A549 (cell line): ENCODE measurements at regions of chr5 and their contacts with region 1.

Region 1: GRCh38 chr5:337563-338130 is 16.1 kb downstream of the AHRR start:
- DNase-seq: peak; percentile 70 to 77
- ATAC-seq: peak; percentile 99 to 100
- H3K4me3 ChIP-seq: no peak overlapping the region
- H3K27ac ChIP-seq: peak overlapping the region in 1 of 2 experiments; percentile 42; a peak in 1 of 6 replicates
- H3K4me1 ChIP-seq: no peaks in the 10 kb centered on the region
- CTCF ChIP-seq: peak; percentile 50
- EP300 ChIP-seq: no peak
- POLR2A ChIP-seq: no peak
- RAD21 ChIP-seq: peak; percentile 14 to 41; a peak in 1 of 5 replicates

Region 2: DNA sequence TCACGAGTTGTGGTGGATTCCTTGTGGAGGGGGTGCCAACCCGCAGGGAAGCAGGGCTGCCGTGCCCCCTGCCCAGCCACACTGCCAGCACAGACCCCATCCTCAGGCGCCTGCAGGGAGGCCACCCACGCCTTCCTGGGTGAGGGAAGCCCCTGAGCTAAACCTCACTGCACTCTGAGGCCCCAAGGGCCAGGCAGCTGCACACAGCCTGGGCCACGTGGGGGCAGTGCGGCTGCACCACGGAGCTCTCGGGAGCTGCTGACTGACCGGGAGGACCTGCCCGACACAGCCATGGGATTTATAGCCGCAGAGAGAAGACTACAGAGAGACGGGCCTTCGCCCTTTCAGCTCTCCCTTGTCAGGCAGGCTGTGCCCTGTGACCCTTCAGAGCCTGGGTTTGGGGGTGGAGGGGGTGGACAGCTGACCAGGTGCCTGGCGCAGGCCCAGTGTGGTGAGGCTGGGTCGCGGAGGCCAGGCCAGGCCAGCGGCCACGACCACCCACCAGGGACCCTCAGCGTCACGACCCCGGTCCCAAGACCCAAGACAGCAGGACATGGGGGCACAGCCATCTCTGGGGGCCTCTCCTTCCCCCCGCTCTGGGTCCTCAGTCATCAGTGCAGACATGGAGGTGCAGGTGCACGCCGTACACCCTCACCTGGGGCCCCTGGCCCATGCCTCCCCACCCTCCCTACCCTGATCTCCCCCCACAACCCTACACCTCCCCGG is 20.4 kb before region 1 on chr5:
- CTCF ChIA-PET with region 1: interaction called, 20 read pairs
- POLR2A ChIA-PET with region 1: interaction called, 3 read pairs
- DNase-seq: peak; percentile 82 to 88
- ATAC-seq: peak; percentile 75 to 90
- H3K4me3 ChIP-seq: no peak overlapping the region
- H3K27ac ChIP-seq: peak overlapping the region; percentile 33 to 87; a peak in 4 of 6 replicates
- H3K4me1 ChIP-seq: peaks cover 24% of the 10 kb centered on the region
- CTCF ChIP-seq: peak; percentile 69
- EP300 ChIP-seq: no peak
- POLR2A ChIP-seq: no peak
- RAD21 ChIP-seq: peak; percentile 81 to 86

Region 3: DNA sequence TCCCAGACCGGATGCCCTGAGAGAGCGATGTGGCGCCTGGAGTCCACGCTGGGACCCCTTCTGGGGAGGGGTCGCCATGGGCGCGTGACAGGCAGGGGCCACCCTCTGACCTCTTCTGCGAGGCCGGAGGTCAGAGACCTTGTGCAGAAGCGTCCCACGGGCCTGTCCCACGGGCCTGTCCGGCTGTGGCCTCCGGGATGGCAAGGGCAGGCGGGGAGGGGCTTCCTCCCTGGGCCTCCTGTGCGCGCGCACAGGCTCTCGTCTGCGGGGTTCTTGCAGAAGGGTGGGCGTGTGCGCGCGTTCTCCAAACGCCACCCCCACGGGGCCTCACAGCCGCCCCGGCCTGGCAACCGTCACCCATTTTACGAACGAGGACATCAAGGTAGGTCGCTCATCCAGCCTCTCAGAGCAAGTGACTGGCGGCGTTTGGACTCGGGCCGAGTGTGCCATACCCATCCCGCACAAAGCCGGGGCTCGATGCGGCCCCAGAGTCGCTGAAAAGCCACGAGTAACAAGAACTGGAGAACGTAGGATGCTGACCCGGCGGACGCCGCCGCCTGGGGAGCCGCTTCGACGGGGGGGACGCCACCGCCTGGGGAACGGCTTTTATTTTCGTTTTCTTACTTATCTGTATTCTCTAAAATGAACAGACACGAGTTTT is 15.2 kb before region 1 on chr5:
- CTCF ChIA-PET with region 1: interaction called, 20 read pairs
- POLR2A ChIA-PET with region 1: interaction called, 3 read pairs
- DNase-seq: no peak
- ATAC-seq: no peak
- H3K4me3 ChIP-seq: peak overlapping the region; percentile 53
- H3K27ac ChIP-seq: peak overlapping the region; percentile 56 to 90; a peak in 5 of 6 replicates
- H3K4me1 ChIP-seq: peaks cover 22% of the 10 kb centered on the region
- CTCF ChIP-seq: no peak
- EP300 ChIP-seq: no peak
- POLR2A ChIP-seq: no peak
- RAD21 ChIP-seq: no peak

Region 4: DNA sequence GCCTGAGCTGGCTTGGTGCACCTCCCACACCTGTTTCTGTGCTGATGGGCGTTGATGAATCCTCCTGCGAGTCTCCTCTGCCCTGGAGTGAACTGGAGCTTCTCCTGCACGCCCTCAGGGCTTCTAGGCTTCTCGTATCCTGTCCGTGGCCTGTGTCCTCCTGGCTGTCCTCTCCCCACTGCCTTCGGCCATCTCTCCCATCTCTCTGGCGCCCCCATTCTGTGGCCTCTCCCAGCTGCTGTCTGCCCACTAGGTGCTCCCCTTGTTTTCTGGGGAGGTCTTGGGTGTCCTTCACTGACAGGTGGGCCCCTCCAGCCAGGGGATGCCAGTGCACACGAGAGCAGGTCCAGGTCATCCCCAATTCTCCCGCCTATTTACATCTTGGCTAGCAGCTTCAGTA is 12.7 kb after region 1 on chr5:
- CTCF ChIA-PET with region 1: interaction called, 18 read pairs
- POLR2A ChIA-PET with region 1: no interaction called
- DNase-seq: peak in 1 of 2 experiments; percentile 18
- ATAC-seq: peak in 1 of 2 experiments; percentile 56; a peak in 2 of 6 replicates
- H3K4me3 ChIP-seq: no peak overlapping the region
- H3K27ac ChIP-seq: no peak overlapping the region
- H3K4me1 ChIP-seq: no peaks in the 10 kb centered on the region
- CTCF ChIP-seq: no peak
- EP300 ChIP-seq: no peak
- POLR2A ChIP-seq: no peak
- RAD21 ChIP-seq: no peak

Region 5: GRCh38 chr5:374631-375335 is 37.1 kb after region 1 on chr5:
- CTCF ChIA-PET with region 1: no interaction called
- POLR2A ChIA-PET with region 1: no interaction called
- DNase-seq: no peak
- ATAC-seq: no peak
- H3K4me3 ChIP-seq: no peak overlapping the region
- H3K27ac ChIP-seq: peak overlapping the region in 1 of 2 experiments; percentile 95; a peak in 4 of 6 replicates
- H3K4me1 ChIP-seq: peaks cover 14% of the 10 kb centered on the region; the same call in 2 of the 3 replicates
- CTCF ChIP-seq: no peak
- EP300 ChIP-seq: no peak
- POLR2A ChIP-seq: no peak
- RAD21 ChIP-seq: no peak